Naive thymus-derived CD8-positive, alpha-beta T cell (primary cell): ENCODE measurements at regions of chr11 and their contacts with region 1.

Region 1: GRCh38 chr11:61102667-61103571 is 630 bp downstream of the CD5 start:
- DNase-seq: peak in 2 of 10 donors; percentile 42 to 53
- ATAC-seq: peak; percentile 35 to 45
- H3K4me3 Mint-ChIP-seq: no peak overlapping the region
- H3K27ac Mint-ChIP-seq: peak overlapping the region in 1 of 10 donors; percentile 100
- H3K4me1 Mint-ChIP-seq: peaks cover 24 to 46% (median 42%) of the 10 kb centered on the region in 4 donors
- H3K27me3 Mint-ChIP-seq: no peaks in the 10 kb centered on the region

Region 2: GRCh38 chr11:61120706-61121191 is 17.8 kb after region 1 on chr11:
- POLR2A ChIA-PET with region 1: interaction called, 33 read pairs
- DNase-seq: peak; percentile 39 to 93 (median 80)
- ATAC-seq: peak; percentile 89 to 94
- H3K4me3 Mint-ChIP-seq: peak overlapping the region; percentile 71 to 90 (median 84)
- H3K27ac Mint-ChIP-seq: peak overlapping the region; percentile 95 to 100 (median 100)
- H3K4me1 Mint-ChIP-seq: peaks cover 49 to 76% (median 63%) of the 10 kb centered on the region in 4 donors
- H3K27me3 Mint-ChIP-seq: no peaks in the 10 kb centered on the region

Region 3: GRCh38 chr11:61198361-61198760 is 95.4 kb after region 1 on chr11:
- POLR2A ChIA-PET with region 1: no interaction called
- DNase-seq: no peak
- ATAC-seq: no peak
- H3K4me3 Mint-ChIP-seq: no peak overlapping the region
- H3K27ac Mint-ChIP-seq: no peak overlapping the region
- H3K4me1 Mint-ChIP-seq: peaks cover 0 to 3% (median 0%) of the 10 kb centered on the region in 4 donors
- H3K27me3 Mint-ChIP-seq: peaks cover 4 to 12% (median 9%) of the 10 kb centered on the region in 5 donors